Activated naive CD4-positive, alpha-beta T cell treated with anti-CD3 and anti-CD28 coated beads for 36 hours (primary cell): ENCODE measurements at regions of chr1 and their contacts with region 1.

Region 1: DNA sequence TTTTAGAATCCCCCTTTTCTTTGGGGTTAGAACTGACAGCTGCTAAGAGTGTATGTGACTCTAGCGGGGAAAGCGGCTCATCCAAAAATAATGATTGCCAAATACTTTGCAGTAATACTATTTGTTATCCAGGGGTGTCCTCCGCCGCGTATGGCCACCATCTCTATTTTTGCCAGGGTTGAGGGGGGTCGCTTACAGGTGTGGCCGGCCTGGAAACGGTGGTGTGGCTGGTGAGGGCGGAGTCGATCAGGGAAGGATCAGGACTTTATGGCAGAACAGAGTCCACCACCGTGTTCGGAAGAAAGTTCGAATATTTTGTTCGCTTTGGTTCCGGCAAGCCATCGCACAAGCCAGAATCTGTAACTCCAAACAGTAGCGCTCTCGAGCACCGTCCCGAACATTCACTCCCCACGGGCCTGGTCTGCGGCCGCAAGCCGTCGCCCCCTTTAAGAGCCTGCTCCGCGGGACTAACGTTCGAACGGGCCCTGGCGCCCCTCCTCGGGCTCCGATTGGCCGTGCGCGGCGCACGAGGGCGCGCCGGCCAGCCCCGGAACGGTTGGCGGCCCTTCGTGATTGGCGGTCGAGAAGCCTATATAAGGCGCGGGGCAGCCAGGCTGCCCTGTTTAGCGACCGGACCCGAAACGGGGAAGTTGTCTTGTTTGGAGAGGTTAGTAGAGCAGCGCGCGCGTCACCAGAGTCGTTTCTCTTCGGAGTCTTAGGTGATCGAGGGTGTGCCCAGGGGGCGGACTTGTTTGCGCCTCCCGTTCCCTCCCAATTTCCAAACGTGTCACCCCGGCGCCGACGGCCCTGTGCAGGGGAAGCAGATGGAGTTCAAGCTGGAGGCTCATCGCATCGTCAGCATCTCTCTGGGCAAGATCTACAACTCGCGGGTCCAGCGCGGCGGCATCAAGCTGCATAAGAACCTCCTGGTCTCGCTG is at the start of gene IER5:
- DNase-seq: peak; percentile 96
- H3K4me3 Mint-ChIP-seq: peak within 1 kb of the TSS; percentile 99
- H3K27ac Mint-ChIP-seq: peak within 1 kb of the TSS; percentile 99
- H3K4me1 Mint-ChIP-seq: peaks cover 44% of the 10 kb centered on the region
- H3K27me3 Mint-ChIP-seq: no peaks in the 10 kb centered on the region
- total RNA-seq, gene IER5: 33.5 to 34.4 TPM

Region 2: DNA sequence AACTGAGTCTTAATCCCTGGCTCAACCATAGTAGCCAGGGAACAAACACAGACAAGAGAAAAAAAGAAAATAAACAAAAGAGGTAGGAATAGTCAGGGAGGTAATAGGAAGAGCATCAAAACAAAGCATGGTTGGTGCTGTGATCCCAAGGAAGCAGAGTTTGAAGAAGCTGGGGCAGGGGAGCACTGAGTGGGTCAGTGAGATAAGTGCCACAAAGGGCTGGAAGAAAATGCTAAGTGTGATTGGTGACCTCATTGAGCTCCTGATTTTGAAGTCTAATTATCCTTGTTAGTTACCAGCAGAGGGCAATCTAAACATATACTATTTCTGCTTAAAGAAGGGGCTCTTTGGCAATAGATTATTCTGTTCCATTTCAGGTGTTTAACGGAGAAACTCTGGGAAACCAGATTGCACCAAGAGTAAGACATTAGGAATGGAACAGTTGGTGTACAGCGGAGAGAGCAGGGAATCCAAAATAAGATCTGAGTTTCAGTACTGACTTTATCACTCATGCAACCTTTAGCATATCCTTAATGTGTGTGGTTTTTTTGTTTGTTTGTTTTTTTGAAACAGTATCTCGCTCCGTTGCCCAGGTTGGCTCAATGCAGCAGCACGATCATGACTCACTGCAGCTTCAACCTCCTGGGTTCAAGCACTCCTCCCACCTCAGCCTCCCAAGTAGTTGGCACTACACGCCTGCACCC is 206.4 kb before region 1 on chr1:
- CTCF ChIA-PET with region 1: interaction called, 4 read pairs
- intact Hi-C with region 1: loop called (anchors 1 kb)
- DNase-seq: no peak
- H3K4me3 Mint-ChIP-seq: no peak overlapping the region
- H3K27ac Mint-ChIP-seq: no peak overlapping the region
- H3K4me1 Mint-ChIP-seq: peaks cover 2% of the 10 kb centered on the region
- H3K27me3 Mint-ChIP-seq: no peaks in the 10 kb centered on the region

Region 3: DNA sequence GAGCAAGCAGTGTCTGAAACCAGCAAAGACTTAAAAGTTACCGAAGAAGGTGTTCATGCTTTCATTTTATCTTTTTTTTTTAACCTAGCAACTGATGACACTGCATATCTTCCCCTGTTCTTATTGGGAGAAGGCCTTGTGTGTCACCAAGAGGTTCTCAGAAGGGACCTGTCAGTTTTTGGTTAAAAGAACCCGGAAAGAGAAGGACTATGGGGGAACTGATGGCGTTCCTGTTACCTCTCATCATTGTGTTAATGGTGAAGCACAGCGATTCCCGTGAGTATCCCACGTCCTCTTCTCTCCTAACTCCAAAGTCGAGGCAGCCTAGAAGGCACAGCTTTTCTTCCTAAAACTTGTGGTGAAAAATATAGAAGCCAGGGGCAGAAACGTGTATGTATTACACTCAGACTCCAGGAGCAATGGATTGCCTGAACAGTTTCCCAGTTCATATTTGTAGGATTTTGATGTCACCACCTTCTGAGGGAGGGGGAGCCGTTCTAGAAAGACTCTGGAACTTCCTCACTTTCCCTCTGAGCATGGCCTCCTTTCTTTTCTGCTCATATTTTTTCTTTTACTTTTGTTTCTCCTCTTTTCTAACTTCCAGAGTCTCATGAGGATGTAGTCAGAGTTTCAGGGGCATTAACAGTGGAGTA is 54.4 kb before region 1 on chr1 and contains the start of gene MR1:
- CTCF ChIA-PET with region 1: interaction called, 10 read pairs
- intact Hi-C with region 1: loop called (anchors 1 kb)
- DNase-seq: peak; percentile 44
- H3K4me3 Mint-ChIP-seq: peak within 1 kb of the TSS; percentile 91
- H3K27ac Mint-ChIP-seq: peak within 1 kb of the TSS; percentile 100
- H3K4me1 Mint-ChIP-seq: peaks cover 49% of the 10 kb centered on the region
- H3K27me3 Mint-ChIP-seq: no peaks in the 10 kb centered on the region
- total RNA-seq, gene MR1: 22.5 to 25.0 TPM

Region 4: GRCh38 chr1:181099152-181100014 is 11.0 kb after region 1 on chr1:
- CTCF ChIA-PET with region 1: interaction called, 8 read pairs
- intact Hi-C with region 1: loop called (anchors 1 kb)
- DNase-seq: peak; percentile 80
- H3K4me3 Mint-ChIP-seq: peak overlapping the region; percentile 67
- H3K27ac Mint-ChIP-seq: peak overlapping the region; percentile 99
- H3K4me1 Mint-ChIP-seq: peaks cover 88% of the 10 kb centered on the region
- H3K27me3 Mint-ChIP-seq: no peaks in the 10 kb centered on the region

Region 5: GRCh38 chr1:181166377-181167196 is 78.2 kb after region 1 on chr1:
- CTCF ChIA-PET with region 1: interaction called, 11 read pairs
- intact Hi-C with region 1: loop called (anchors 1 kb)
- DNase-seq: peak; percentile 88
- H3K4me3 Mint-ChIP-seq: no peak overlapping the region
- H3K27ac Mint-ChIP-seq: no peak overlapping the region
- H3K4me1 Mint-ChIP-seq: peaks cover 5% of the 10 kb centered on the region
- H3K27me3 Mint-ChIP-seq: no peaks in the 10 kb centered on the region

Region 6: DNA sequence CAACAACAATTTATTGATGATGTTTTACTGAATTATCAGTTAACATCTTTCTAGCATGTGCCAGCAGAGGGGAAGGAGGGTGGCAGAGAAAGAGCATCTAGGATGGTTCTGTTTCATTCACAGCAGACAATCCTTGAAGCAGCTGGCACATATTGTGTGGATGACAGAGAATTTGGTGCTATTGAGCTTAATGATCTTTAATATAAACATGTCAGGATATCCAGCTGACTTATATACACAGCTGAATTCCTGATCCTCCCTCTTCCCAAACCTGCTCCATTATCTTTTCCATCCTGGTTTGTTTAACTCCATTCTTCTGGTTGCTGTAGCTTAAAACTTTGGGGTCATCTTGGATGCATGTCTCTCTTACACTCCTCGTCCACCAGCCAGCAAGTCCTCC is 613.5 kb after region 1 on chr1:
- CTCF ChIA-PET with region 1: no interaction called
- intact Hi-C with region 1: no loop called
- DNase-seq: no peak
- H3K4me3 Mint-ChIP-seq: no peak overlapping the region
- H3K27ac Mint-ChIP-seq: no peak overlapping the region
- H3K4me1 Mint-ChIP-seq: no peaks in the 10 kb centered on the region
- H3K27me3 Mint-ChIP-seq: peaks cover 4% of the 10 kb centered on the region